Activated CD4-positive, alpha-beta memory T cell treated with anti-CD3 and anti-CD28 coated beads for 36 hours (primary cell): ENCODE measurements at regions of chr20 and their contacts with region 1.

Region 1: DNA sequence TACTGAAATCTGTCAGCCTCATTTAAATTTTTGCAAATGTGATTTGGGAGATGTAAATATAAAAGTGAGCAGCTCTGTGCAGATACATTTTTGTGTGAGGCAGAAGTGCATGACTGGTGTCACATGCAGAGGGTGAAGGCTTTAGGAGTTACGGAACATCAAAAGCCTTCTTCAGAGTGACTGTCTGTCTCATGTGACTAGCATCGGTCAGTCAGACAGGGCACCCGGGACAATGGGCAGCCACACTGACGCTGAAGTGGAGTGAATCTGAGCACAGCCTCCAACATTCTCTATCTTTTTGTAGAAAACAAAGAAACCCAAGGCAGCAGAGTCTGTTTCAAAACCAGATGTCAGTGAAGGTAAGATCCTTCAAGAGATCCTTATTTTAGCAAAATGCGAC is 7.9 kb upstream of the FAM209A start:
- DNase-seq: no peak
- H3K4me3 Mint-ChIP-seq: no peak overlapping the region
- H3K27ac Mint-ChIP-seq: no peak overlapping the region
- H3K4me1 Mint-ChIP-seq: no peaks in the 10 kb centered on the region
- H3K27me3 Mint-ChIP-seq: no peaks in the 10 kb centered on the region

Region 2: GRCh38 chr20:56400090-56400542 is 116.5 kb before region 1 on chr20:
- CTCF ChIA-PET with region 1: no interaction called
- POLR2A ChIA-PET with region 1: no interaction called
- intact Hi-C with region 1: loop called (anchors 1 kb)
- DNase-seq: peak; percentile 68
- H3K4me3 Mint-ChIP-seq: no peak overlapping the region
- H3K27ac Mint-ChIP-seq: no peak overlapping the region
- H3K4me1 Mint-ChIP-seq: peaks cover 25% of the 10 kb centered on the region
- H3K27me3 Mint-ChIP-seq: no peaks in the 10 kb centered on the region

Region 3: DNA sequence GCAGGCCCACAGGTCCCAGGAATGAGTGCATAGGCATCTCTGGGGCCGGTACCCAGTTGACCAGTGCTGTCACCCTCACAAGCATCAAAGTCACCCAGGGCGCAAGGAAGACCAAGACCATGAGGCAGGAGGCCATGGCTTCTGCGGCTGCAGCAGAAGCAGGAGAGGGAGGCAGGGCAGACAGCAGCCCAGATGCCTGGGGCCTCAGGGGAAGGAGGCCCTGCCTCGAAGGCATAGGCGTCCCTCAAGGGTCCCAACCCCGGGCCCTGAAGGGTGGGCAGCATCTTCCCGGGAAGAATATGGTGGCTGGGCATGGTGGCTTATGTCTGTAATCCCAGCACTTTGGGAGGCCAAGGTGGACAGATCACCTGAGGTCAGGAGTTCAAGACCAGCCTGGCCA is 10.9 kb after region 1 on chr20:
- CTCF ChIA-PET with region 1: no interaction called
- POLR2A ChIA-PET with region 1: no interaction called
- intact Hi-C with region 1: no loop called
- DNase-seq: no peak
- H3K4me3 Mint-ChIP-seq: no peak overlapping the region
- H3K27ac Mint-ChIP-seq: no peak overlapping the region
- H3K4me1 Mint-ChIP-seq: peaks cover 3% of the 10 kb centered on the region
- H3K27me3 Mint-ChIP-seq: no peaks in the 10 kb centered on the region